ENCODE measurements at regions of chr3 and their contacts with region 1.

Region 1: DNA sequence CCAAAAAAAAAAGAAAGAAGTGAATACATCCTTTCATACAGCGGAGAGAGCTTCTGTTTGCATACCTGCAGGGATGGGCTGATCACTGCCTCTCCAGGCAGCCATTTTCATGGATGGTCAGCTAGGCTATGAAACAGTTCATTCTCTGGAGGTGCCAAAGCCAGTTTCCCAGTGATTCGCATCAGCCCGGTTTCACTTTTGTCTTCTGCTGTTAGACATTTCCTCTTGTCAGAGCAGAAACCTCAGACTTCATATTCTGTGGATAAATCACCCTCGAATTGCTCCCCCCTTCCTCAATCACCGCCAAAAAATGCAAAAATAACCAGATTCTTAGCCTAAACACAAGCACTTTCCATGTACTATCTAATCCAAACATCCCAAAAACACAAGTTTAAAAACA is 225.6 kb downstream of the ADAMTS9 start:
- DNase-seq: no peak
- ATAC-seq: no peak
- H3K4me3 ChIP-seq: no peak overlapping the region
- H3K27ac ChIP-seq: no peak overlapping the region
- H3K4me1 ChIP-seq: no peaks in the 10 kb centered on the region
- H3K27me3 ChIP-seq: no peaks in the 10 kb centered on the region
- CTCF ChIP-seq: no peak
- EP300 ChIP-seq: no peak
- POLR2A ChIP-seq: no peak
- RAD21 ChIP-seq: no peak

Region 2: DNA sequence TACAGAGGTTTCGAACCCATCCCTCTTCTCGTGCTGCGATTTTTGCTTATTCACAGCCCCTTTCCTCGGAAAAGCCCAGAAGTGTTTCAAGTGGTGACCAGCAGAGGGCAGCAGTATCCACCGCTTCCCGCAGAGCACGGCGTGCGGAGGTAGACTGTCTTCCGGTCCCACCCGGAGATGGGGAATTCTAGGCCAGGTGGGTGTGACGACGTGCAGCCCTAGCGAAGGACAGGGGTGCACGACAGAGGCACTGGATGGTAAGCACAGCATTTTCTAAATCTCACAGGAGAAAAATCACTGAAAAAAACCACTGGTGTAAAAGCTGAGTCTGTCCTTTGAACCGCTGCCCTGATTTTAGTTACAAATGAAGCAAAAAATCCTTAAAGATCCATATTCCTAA is 431.5 kb before region 1 on chr3:
- CTCF ChIA-PET with region 1: interaction called, 34 read pairs
- POLR2A ChIA-PET with region 1: no interaction called
- RAD21 ChIA-PET with region 1: interaction called, 23 read pairs
- SMC1A ChIA-PET with region 1: interaction called, 21 read pairs
- in situ Hi-C with region 1: no loop called
- intact Hi-C with region 1: no loop called
- DNase-seq: peak; percentile 41
- ATAC-seq: peak; percentile 99
- H3K4me3 ChIP-seq: no peak overlapping the region; the same call in 1 of the 2 replicates
- H3K27ac ChIP-seq: no peak overlapping the region
- H3K4me1 ChIP-seq: no peaks in the 10 kb centered on the region; the same call in 1 of the 2 replicates
- H3K27me3 ChIP-seq: no peaks in the 10 kb centered on the region
- CTCF ChIP-seq: peak; percentile 79 to 97 (median 89); a peak in 5 of 6 replicates
- EP300 ChIP-seq: no peak
- POLR2A ChIP-seq: no peak
- RAD21 ChIP-seq: peak; percentile 97

Region 3: GRCh38 chr3:64405211-64405835 is 56.9 kb before region 1 on chr3:
- CTCF ChIA-PET with region 1: interaction called, 70 read pairs
- POLR2A ChIA-PET with region 1: interaction called, 4 read pairs
- RAD21 ChIA-PET with region 1: interaction called, 32 read pairs
- SMC1A ChIA-PET with region 1: interaction called, 72 read pairs
- in situ Hi-C with region 1: no loop called
- intact Hi-C with region 1: loop called (anchors 5 kb)
- DNase-seq: no peak
- ATAC-seq: no peak
- H3K4me3 ChIP-seq: no peak overlapping the region
- H3K27ac ChIP-seq: no peak overlapping the region
- H3K4me1 ChIP-seq: no peaks in the 10 kb centered on the region
- H3K27me3 ChIP-seq: no peaks in the 10 kb centered on the region
- CTCF ChIP-seq: no peak
- EP300 ChIP-seq: no peak
- POLR2A ChIP-seq: no peak
- RAD21 ChIP-seq: no peak

Region 4: DNA sequence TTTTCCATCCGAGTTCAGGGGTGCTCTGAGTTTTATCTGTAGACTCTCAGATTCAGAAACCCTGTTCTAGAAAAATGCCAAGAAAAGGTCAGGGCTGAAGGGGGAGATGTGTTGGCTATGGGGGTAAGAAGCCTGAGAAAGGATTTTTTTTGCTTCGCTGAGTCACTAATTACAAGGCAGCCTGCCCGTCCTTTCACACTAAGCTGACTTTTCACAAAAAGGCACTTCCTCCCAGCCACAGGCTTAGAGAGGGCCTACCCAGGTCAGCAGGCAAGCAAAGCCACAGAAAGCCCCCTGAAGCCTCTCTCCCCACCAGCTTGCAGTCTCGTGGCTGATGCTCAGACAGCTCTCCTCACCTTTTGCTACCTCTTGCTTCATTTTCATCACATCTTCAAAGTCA is 44.4 kb before region 1 on chr3:
- CTCF ChIA-PET with region 1: interaction called, 18 read pairs
- POLR2A ChIA-PET with region 1: interaction called, 3 read pairs
- RAD21 ChIA-PET with region 1: interaction called, 9 read pairs
- SMC1A ChIA-PET with region 1: interaction called, 44 read pairs
- in situ Hi-C with region 1: no loop called
- intact Hi-C with region 1: no loop called
- DNase-seq: peak; percentile 33
- ATAC-seq: peak; percentile 90
- H3K4me3 ChIP-seq: no peak overlapping the region
- H3K27ac ChIP-seq: no peak overlapping the region
- H3K4me1 ChIP-seq: 0 out of 2 replicates have a peak, but pooled peaks cover 5% of the 10 kb centered on the region
- H3K27me3 ChIP-seq: no peaks in the 10 kb centered on the region
- CTCF ChIP-seq: no peak
- EP300 ChIP-seq: 0 out of 4 replicates have a peak, but pooled peaks of 1 of the 2 experiments have one; percentile 23
- POLR2A ChIP-seq: no peak
- RAD21 ChIP-seq: no peak

Region 5: DNA sequence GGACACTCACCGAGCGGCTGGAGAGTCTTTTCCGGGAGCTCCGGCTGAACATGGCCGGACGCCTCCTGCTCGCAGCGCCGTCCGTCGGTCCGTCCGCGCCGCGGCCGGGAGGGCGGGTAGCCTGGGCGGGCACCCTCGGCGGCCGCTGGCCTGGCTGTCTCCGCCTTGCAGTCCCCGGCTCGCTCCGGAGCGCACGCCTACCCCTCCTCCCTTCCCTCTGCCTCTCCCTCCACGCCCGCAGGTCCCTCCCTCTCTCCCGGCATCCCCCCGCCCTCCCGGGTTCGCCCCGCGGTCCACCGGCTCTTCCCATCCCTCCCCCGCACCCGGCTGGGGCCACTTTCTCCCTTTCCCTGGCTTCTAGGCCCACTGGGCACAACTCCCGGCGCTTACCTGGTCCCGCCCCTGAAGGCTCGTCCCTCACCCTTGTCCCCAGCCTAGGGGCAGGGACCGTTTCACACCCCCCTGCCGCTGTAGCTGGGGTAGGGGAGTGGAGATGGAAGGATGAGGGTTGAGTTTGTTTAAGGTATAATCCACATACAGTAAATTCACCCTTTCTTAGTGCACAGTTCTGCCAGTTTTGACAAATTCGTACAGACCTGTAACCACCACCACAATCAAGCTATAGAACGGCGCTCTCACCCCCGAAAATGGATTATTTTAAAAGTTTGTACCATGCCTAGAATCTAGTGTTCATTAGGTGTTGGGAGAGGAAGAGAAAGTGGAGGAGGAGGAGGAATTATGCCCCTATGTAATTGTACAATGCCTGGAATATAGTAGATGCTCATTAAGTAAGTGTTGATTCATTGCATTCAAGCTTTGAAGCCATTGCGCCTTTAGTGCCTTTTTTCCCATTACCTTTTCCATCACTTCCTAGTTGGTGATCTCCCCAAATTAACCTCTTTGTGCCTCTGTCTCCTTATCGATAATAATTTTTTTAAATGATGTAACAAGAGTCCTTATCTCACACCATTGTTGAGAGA is 16.6 kb before region 1 on chr3:
- CTCF ChIA-PET with region 1: interaction called, 95 read pairs
- POLR2A ChIA-PET with region 1: interaction called, 3 read pairs
- RAD21 ChIA-PET with region 1: interaction called, 38 read pairs
- SMC1A ChIA-PET with region 1: interaction called, 59 read pairs
- in situ Hi-C with region 1: no loop called
- intact Hi-C with region 1: no loop called
- DNase-seq: no peak
- ATAC-seq: peak; percentile 24; the same call in 1 of the 3 replicates
- H3K4me3 ChIP-seq: no peak overlapping the region
- H3K27ac ChIP-seq: no peak overlapping the region
- H3K4me1 ChIP-seq: peaks cover 2% of the 10 kb centered on the region
- H3K27me3 ChIP-seq: peaks cover 3 to 5% of the 10 kb centered on the region in 2 experiments; a peak in 2 of 4 replicates
- CTCF ChIP-seq: no peak
- EP300 ChIP-seq: no peak
- POLR2A ChIP-seq: no peak
- RAD21 ChIP-seq: no peak

Region 6: GRCh38 chr3:64533617-64534317 is 71.6 kb after region 1 on chr3:
- CTCF ChIA-PET with region 1: no interaction called
- POLR2A ChIA-PET with region 1: no interaction called
- RAD21 ChIA-PET with region 1: no interaction called
- SMC1A ChIA-PET with region 1: no interaction called
- in situ Hi-C with region 1: no loop called
- intact Hi-C with region 1: no loop called
- DNase-seq: peak; percentile 7
- ATAC-seq: peak; percentile 99
- H3K4me3 ChIP-seq: no peak overlapping the region
- H3K27ac ChIP-seq: no peak overlapping the region
- H3K4me1 ChIP-seq: no peaks in the 10 kb centered on the region
- H3K27me3 ChIP-seq: 0 out of 4 replicates have a peak, but pooled peaks cover 0 to 2% of the 10 kb centered on the region in 2 experiments
- CTCF ChIP-seq: peak; percentile 84 to 90 (median 84)
- EP300 ChIP-seq: no peak
- POLR2A ChIP-seq: no peak
- RAD21 ChIP-seq: peak; percentile 88

Region 7: DNA sequence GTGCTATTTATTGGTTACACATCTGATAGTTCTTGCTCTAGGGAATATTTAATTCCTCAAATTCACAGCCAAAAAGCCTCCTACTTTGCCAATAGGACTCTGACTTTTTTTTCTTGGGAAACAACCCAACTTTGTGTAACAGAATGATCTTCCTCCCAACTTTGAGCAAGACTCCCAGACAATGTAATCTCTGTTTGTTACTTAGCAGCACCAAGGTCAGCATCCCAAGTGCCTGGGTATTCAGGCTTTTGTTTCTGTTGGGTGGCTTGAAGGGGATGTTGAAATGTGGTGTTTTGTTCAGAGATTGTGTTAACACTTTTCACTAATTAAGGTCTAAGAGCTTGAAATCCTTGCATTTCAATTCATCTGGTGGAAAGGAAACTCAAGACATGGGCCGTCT is 109.8 kb after region 1 on chr3:
- CTCF ChIA-PET with region 1: no interaction called
- POLR2A ChIA-PET with region 1: no interaction called
- RAD21 ChIA-PET with region 1: no interaction called
- SMC1A ChIA-PET with region 1: no interaction called
- in situ Hi-C with region 1: no loop called
- intact Hi-C with region 1: no loop called
- DNase-seq: no peak
- ATAC-seq: no peak
- H3K4me3 ChIP-seq: no peak overlapping the region
- H3K27ac ChIP-seq: no peak overlapping the region
- H3K4me1 ChIP-seq: no peaks in the 10 kb centered on the region
- H3K27me3 ChIP-seq: no peaks in the 10 kb centered on the region
- CTCF ChIP-seq: no peak
- EP300 ChIP-seq: no peak
- POLR2A ChIP-seq: no peak
- RAD21 ChIP-seq: no peak